Heart right ventricle (tissue), 16 donors: ENCODE measurements at regions of chr1 and their contacts with region 1.

Region 1: DNA sequence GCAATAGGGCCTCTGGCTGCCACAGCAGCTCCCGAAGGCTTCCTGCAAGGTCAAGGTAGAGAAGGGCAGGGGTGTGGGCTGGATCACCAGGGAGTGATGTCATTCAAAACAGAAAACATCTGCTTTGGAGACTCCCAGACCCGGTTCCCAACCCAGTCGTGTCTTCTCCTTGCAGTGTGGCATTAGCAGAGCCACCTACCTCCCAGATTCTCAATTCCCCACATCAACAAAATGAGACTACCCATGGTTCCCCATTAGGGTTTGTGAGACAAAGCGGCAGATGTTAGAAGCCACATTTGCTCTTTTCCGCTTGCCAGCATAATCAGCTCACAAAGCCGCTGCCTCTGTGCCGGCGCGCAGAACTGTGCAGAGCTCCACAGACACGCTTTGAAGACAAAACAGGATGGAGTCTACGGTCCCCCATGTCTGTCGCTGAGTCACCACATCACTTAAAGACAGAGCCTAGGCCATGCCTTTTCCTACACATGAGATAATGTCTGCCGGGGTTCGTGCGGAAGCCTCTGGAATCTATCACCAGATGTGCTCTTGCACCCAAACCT is 12.5 kb downstream of the KIF17 start:
- DNase-seq: no peak
- ATAC-seq: no peak
- H3K4me3 ChIP-seq: no peak overlapping the region
- H3K27ac ChIP-seq: no peak overlapping the region
- H3K4me1 ChIP-seq: no peaks in the 10 kb centered on the region
- H3K27me3 ChIP-seq: no peaks in the 10 kb centered on the region
- CTCF ChIP-seq: no peak

Region 2: GRCh38 chr1:20753589-20753988 is 48.3 kb after region 1 on chr1:
- intact Hi-C with region 1: loop called in 1 of 10 experiments (anchors 5 kb)
- DNase-seq: no peak
- ATAC-seq: no peak
- H3K4me3 ChIP-seq: no peak overlapping the region
- H3K27ac ChIP-seq: no peak overlapping the region
- H3K4me1 ChIP-seq: peaks cover 0 to 7% (median 0%) of the 10 kb centered on the region in 9 donors
- H3K27me3 ChIP-seq: no peaks in the 10 kb centered on the region
- CTCF ChIP-seq: no peak